ENCODE measurements at regions of chr10 and their contacts with region 1.

Region 1: GRCh38 chr10:110871298-110872084 is at the start of gene PDCD4:
- DNase-seq: peak; percentile 100
- ATAC-seq: peak; percentile 97
- H3K4me3 ChIP-seq: peak within 1 kb of the TSS; percentile 89
- H3K27ac ChIP-seq: peak within 1 kb of the TSS; percentile 95
- H3K4me1 ChIP-seq: peaks cover 6% of the 10 kb centered on the region
- H3K27me3 ChIP-seq: no peaks in the 10 kb centered on the region
- total RNA-seq, gene PDCD4: 61.5 to 82.7 (median 76.2) TPM

Region 2: GRCh38 chr10:109934958-109935706 is 936.4 kb before region 1 on chr10:
- intact Hi-C with region 1: no loop called
- DNase-seq: peak; percentile 32 to 59 (median 51)
- ATAC-seq: peak; percentile 77 to 95
- H3K4me3 ChIP-seq: no peak overlapping the region
- H3K27ac ChIP-seq: peak overlapping the region; percentile 25
- H3K4me1 ChIP-seq: peaks cover 8% of the 10 kb centered on the region
- H3K27me3 ChIP-seq: no peaks in the 10 kb centered on the region

Region 3: DNA sequence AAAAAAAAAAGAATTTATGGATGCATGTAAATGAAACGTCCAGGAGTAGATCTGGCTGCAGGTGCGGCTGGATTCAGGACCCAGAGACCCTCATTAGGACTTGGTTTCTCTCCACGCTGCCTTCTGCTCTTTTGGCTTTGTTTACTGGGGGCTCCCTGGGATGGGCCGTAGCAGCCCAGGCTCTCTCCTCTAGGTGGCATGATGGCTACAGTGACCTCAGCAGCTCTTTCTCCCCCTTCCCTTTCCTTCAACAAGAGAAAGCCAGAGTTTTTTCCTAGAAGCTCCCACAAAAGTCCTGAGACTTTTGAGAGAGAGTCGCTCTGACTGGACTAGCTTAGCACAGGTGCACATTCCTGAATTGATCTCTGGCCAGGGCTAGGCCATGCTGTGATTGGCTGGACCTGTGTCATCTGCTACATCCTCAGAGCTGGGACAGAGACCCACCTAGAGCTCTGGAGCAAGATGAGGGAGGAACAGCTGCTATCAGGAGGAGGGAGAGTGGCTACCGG is 67.6 kb before region 1 on chr10:
- intact Hi-C with region 1: loop called in 2 of 4 experiments (anchors 5 to 10 kb)
- DNase-seq: peak; percentile 52 to 85 (median 79)
- ATAC-seq: peak; percentile 78 to 81
- H3K4me3 ChIP-seq: no peak overlapping the region
- H3K27ac ChIP-seq: peak overlapping the region; percentile 56
- H3K4me1 ChIP-seq: peaks cover 15% of the 10 kb centered on the region
- H3K27me3 ChIP-seq: no peaks in the 10 kb centered on the region

Region 4: GRCh38 chr10:110820321-110820814 is 51.1 kb before region 1 on chr10:
- intact Hi-C with region 1: loop called in 1 of 4 experiments (anchors 5 kb)
- DNase-seq: peak; percentile 55 to 84 (median 74)
- ATAC-seq: peak; percentile 64 to 67
- H3K4me3 ChIP-seq: no peak overlapping the region
- H3K27ac ChIP-seq: peak overlapping the region; percentile 96
- H3K4me1 ChIP-seq: peaks cover 28% of the 10 kb centered on the region
- H3K27me3 ChIP-seq: no peaks in the 10 kb centered on the region

Region 5: GRCh38 chr10:111297351-111297848 is 425.9 kb after region 1 on chr10:
- intact Hi-C with region 1: no loop called
- DNase-seq: no peak
- ATAC-seq: no peak
- H3K4me3 ChIP-seq: no peak overlapping the region
- H3K27ac ChIP-seq: no peak overlapping the region
- H3K4me1 ChIP-seq: no peaks in the 10 kb centered on the region
- H3K27me3 ChIP-seq: no peaks in the 10 kb centered on the region

Measured in right cardiac atrium (tissue), 5 donors.